Activated T-helper 1 cell treated with anti-CD3 and anti-CD28 coated beads, Interleukin-12 subunit alpha, Interleukin-12 subunit beta, Interleukin-2, Interleukin-4 antibody, amounts not matched to agents 30 ng/mL and 10 ng/mL and 1 ng/mL, durations not matched to agents 14 hours and 24 hours and 36 hours (primary cell): ENCODE measurements at regions of chr16 and their contacts with region 1.

Region 1: GRCh38 chr16:70251629-70252354 is at the start of gene EXOSC6:
- DNase-seq: peak; percentile 90
- H3K4me3 Mint-ChIP-seq: peak within 1 kb of the TSS; percentile 91
- H3K27ac Mint-ChIP-seq: peak within 1 kb of the TSS; percentile 96
- H3K4me1 Mint-ChIP-seq: peaks cover 10% of the 10 kb centered on the region
- H3K27me3 Mint-ChIP-seq: no peaks in the 10 kb centered on the region
- total RNA-seq, gene EXOSC6: 40.5 and 42.1 TPM in 2 replicates

Region 2: GRCh38 chr16:69754469-69755310 is 497.1 kb before region 1 on chr16 and contains the start of gene NOB1:
- intact Hi-C with region 1: no loop called
- DNase-seq: peak; percentile 97
- H3K4me3 Mint-ChIP-seq: peak within 1 kb of the TSS; percentile 99
- H3K27ac Mint-ChIP-seq: peak within 1 kb of the TSS; percentile 98
- H3K4me1 Mint-ChIP-seq: peaks cover 32% of the 10 kb centered on the region
- H3K27me3 Mint-ChIP-seq: peaks cover 2% of the 10 kb centered on the region
- total RNA-seq, gene NOB1: 132 and 133 TPM in 2 replicates

Region 3: DNA sequence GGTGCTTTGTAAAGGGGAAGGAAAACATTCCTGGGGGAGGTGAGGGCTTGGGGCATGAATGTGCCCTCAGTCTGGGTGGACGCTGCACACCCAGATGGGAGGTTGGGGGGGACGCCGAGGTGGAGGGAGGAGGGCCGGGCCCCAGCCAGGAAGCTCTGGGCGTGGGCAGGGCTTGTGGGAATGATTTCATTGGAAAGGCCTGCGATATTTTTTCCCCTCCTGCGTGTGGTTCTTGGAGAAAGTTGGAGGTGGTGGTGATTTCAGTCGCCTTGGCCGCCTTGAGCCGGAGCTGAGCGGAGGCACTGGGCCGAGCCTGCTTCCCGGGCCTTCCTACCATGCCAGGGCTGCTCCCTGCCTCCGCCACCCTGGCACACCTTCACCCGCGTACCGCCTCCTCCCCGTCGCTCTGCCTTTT is 327.0 kb before region 1 on chr16:
- intact Hi-C with region 1: no loop called
- DNase-seq: no peak
- H3K4me3 Mint-ChIP-seq: no peak overlapping the region
- H3K27ac Mint-ChIP-seq: no peak overlapping the region
- H3K4me1 Mint-ChIP-seq: no peaks in the 10 kb centered on the region
- H3K27me3 Mint-ChIP-seq: no peaks in the 10 kb centered on the region

Region 4: GRCh38 chr16:70289229-70290098 is 37.7 kb after region 1 on chr16 and contains the start of gene AARS1:
- intact Hi-C with region 1: loop called (anchors 1 kb)
- DNase-seq: peak; percentile 95
- H3K4me3 Mint-ChIP-seq: peak within 1 kb of the TSS; percentile 96
- H3K27ac Mint-ChIP-seq: peak within 1 kb of the TSS; percentile 99
- H3K4me1 Mint-ChIP-seq: peaks cover 23% of the 10 kb centered on the region
- H3K27me3 Mint-ChIP-seq: no peaks in the 10 kb centered on the region
- total RNA-seq, gene AARS1: 109 and 111 TPM in 2 replicates

Region 5: GRCh38 chr16:70342016-70342415 is 90.2 kb after region 1 on chr16:
- intact Hi-C with region 1: loop called (anchors 2 kb)
- DNase-seq: no peak
- H3K4me3 Mint-ChIP-seq: no peak overlapping the region
- H3K27ac Mint-ChIP-seq: no peak overlapping the region
- H3K4me1 Mint-ChIP-seq: peaks cover 5% of the 10 kb centered on the region
- H3K27me3 Mint-ChIP-seq: no peaks in the 10 kb centered on the region

Region 6: DNA sequence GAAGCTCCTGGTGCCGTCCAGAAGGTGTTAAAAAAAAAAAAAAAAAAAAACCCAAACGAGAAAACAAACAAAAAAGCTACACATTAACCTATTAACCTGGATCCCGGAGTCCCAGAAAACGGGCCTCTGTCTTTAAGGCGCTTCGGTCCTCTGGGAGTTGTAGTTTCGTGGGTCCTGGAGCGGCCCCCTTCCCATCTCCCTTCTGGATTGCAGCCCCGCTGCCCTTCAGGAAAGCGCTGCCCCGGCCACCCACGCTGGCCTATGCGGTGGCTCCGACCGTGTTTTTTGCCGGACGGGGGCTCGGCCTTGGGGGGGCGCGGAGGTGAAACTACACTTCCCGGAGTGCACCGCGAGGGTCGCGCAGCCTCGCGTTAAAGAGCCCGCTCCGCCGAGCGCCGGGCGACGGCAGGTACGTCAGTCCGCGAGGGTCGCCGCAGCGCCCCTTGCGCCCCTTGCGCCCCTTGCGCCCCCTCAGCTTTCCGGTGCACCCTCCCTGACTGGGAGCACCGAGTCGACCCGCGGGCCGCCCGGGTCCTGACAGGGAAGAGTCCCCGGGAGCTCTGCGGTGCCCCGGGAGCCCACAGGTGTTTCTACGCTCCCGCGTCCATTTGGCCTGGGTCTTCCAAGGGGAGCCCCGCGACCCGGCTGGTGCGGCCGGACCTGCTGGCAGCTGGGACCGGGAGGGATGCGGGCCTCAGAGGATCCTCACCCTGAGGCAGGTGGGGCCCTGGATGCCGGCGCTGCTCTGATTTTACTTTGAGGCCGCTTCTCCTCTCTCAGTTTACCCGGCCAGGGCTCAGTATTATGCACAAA is 202.6 kb after region 1 on chr16 and contains the start of gene FCSK:
- intact Hi-C with region 1: loop called (anchors 5 kb)
- DNase-seq: peak; percentile 52
- H3K4me3 Mint-ChIP-seq: peak within 1 kb of the TSS; percentile 91
- H3K27ac Mint-ChIP-seq: peak within 1 kb of the TSS; percentile 83
- H3K4me1 Mint-ChIP-seq: peaks cover 21% of the 10 kb centered on the region
- H3K27me3 Mint-ChIP-seq: no peaks in the 10 kb centered on the region
- total RNA-seq, gene FCSK: 19.7 and 21.0 TPM in 2 replicates